Aorta (tissue), 5 donors: ENCODE measurements at regions of chr17 and their contacts with region 1.

Region 1: DNA sequence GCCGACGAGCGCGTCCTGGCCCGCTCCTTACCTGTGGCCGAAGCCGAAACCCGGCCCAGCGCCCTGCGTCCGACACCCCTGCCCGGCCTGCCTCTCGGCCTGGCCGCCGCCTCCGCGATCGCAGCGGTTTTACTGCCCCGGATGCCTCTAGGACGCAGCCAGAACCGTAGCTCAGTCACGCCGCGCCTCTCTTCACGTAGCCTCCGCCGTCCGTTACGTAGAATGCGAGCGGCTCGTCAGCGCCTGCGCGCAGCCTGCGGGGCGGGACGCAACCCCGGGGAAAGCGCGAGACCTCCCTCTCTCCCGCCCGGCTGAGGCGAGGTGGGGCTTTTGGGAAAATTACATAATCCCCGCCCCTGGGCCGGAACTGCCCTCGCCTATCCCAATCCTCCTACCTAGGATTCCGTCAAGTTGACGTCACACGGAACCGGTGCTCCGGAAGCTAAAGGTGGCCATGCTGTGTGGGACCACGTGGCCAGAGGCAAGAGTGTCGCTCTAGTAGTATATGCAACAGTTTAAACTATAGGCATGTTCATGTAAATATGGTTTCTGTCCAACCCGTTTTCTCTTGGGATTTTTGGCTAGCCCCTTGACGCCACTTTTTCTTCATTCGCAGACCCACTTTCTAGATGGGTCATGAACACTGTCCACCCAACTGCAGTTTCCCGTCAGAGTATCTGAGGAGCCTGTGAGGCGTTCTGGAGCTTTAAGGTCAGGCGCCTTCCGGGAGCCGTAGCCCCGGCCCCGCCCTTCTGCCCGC is at the start of gene CCDC47:
- DNase-seq: peak; percentile 98 to 99
- ATAC-seq: peak; percentile 99
- H3K4me3 ChIP-seq: peak within 1 kb of the TSS; percentile 64 to 71
- H3K27ac ChIP-seq: peak within 1 kb of the TSS; percentile 81 to 93
- H3K4me1 ChIP-seq: peaks cover 0 to 3% of the 10 kb centered on the region in 2 donors
- H3K27me3 ChIP-seq: no peaks in the 10 kb centered on the region
- total RNA-seq, gene CCDC47: 62.7 to 65.8 TPM

Region 2: GRCh38 chr17:63722403-63722802 is 51.2 kb before region 1 on chr17:
- intact Hi-C with region 1: no loop called
- DNase-seq: no peak
- ATAC-seq: no peak
- H3K4me3 ChIP-seq: no peak overlapping the region
- H3K27ac ChIP-seq: no peak overlapping the region
- H3K4me1 ChIP-seq: no peaks in the 10 kb centered on the region
- H3K27me3 ChIP-seq: no peaks in the 10 kb centered on the region

Region 3: GRCh38 chr17:63741221-63742049 is 32.1 kb before region 1 on chr17 and contains the start of gene STRADA:
- intact Hi-C with region 1: loop called in 1 of 2 experiments (anchors 2 kb)
- DNase-seq: peak; percentile 99 to 100
- ATAC-seq: peak; percentile 100
- H3K4me3 ChIP-seq: peak within 1 kb of the TSS; percentile 56 to 60
- H3K27ac ChIP-seq: peak within 1 kb of the TSS; percentile 20 to 94
- H3K4me1 ChIP-seq: no peaks in the 10 kb centered on the region
- H3K27me3 ChIP-seq: no peaks in the 10 kb centered on the region
- total RNA-seq, gene STRADA: 39.0 to 63.8 TPM

Region 4: GRCh38 chr17:63827002-63827771 is 53.6 kb after region 1 on chr17 and contains the starts of genes FTSJ3 and PSMC5:
- intact Hi-C with region 1: loop called in 1 of 2 experiments (anchors 2 kb)
- DNase-seq: peak; percentile 97 to 99
- ATAC-seq: peak; percentile 96
- H3K4me3 ChIP-seq: peak within 1 kb of the TSS; percentile 36 to 63
- H3K27ac ChIP-seq: peak within 1 kb of the TSS in 1 of 2 donors; percentile 30
- H3K4me1 ChIP-seq: no peaks in the 10 kb centered on the region
- H3K27me3 ChIP-seq: no peaks in the 10 kb centered on the region
- total RNA-seq, gene FTSJ3: 29.4 to 38.1 TPM
- total RNA-seq, gene PSMC5: 81.1 to 92.9 TPM

Region 5: GRCh38 chr17:63842540-63843386 is 69.2 kb after region 1 on chr17 and contains the start of gene SMARCD2:
- intact Hi-C with region 1: loop called in 1 of 2 experiments (anchors 5 kb)
- DNase-seq: peak; percentile 99 to 100
- ATAC-seq: peak; percentile 96
- H3K4me3 ChIP-seq: peak within 1 kb of the TSS; percentile 75
- H3K27ac ChIP-seq: peak within 1 kb of the TSS; percentile 40 to 64
- H3K4me1 ChIP-seq: peaks cover 2 to 4% of the 10 kb centered on the region in 2 donors
- H3K27me3 ChIP-seq: no peaks in the 10 kb centered on the region
- total RNA-seq, gene SMARCD2: 43.0 to 69.7 TPM

Region 6: GRCh38 chr17:64190488-64190887 is 416.9 kb after region 1 on chr17:
- intact Hi-C with region 1: no loop called
- DNase-seq: no peak
- ATAC-seq: no peak
- H3K4me3 ChIP-seq: no peak overlapping the region
- H3K27ac ChIP-seq: no peak overlapping the region
- H3K4me1 ChIP-seq: no peaks in the 10 kb centered on the region
- H3K27me3 ChIP-seq: no peaks in the 10 kb centered on the region